Endothelial cell of umbilical vein (primary cell): ENCODE measurements at regions of chr6 and their contacts with region 1.

Region 1: DNA sequence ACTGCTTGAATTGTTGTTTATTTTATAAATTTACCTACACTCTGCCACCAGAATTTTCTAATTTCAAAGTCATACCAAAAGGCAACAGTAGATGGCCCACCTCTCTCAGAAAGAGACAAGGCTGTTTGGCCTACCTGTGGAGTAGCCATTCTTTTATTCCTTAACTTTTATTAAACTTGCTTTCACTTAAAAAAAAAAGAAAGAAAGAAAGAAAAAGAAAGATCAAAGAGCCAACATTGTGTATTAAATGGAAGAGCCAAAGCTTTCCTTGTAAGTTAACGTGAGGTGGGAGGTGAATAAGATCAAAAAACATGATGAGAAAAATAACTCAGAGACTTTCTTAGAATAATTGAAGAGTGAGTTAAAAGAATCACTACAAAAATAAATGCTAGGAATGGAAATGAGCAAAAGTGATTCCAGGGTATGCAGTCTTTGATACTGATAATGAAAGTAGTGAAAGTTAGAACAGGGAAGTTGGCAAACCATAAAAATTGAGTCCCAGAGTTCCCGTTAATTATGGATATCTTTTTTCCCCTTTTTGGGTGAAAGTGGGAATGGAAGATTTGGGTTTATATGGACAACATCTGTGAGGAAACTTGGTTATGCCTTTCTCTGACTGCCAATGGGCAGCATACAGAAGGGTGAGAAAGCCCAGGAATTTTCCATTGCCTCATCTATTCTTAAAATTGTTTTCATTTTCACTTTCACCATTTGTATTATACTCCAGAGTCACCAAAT is 35.9 kb upstream of the MYB start:
- DNase-seq: peak; percentile 34
- H3K4me3 ChIP-seq: no peak overlapping the region
- H3K27ac ChIP-seq: no peak overlapping the region
- H3K4me1 ChIP-seq: no peaks in the 10 kb centered on the region
- H3K27me3 ChIP-seq: peaks cover 6% of the 10 kb centered on the region in 2 experiments
- CTCF ChIP-seq: peak; percentile 30 to 42
- POLR2A ChIP-seq: no peak

Region 2: DNA sequence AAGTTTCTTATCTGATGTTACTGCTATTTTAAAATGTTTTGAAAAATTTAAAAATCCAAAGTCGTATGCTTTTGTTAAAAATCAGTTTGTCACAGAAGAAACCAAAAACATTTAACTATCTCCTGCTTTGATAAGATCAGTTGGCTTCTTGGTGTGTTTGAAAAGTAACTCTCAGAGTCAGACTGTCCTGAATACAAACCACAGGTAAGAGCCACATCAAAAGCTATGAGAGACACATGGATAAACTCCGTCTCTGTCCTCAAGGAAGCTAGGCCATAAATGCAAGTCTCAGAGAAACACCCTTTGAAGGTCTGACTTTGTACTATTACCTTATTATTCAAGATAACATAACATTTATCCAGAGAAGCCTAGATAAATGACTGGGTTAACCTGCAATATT is 98.3 kb before region 1 on chr6:
- CTCF ChIA-PET with region 1: no interaction called
- POLR2A ChIA-PET with region 1: no interaction called
- dilution Hi-C with region 1: no loop called
- intact Hi-C with region 1: no loop called
- DNase-seq: no peak
- H3K4me3 ChIP-seq: no peak overlapping the region
- H3K27ac ChIP-seq: no peak overlapping the region
- H3K4me1 ChIP-seq: peaks cover 11% of the 10 kb centered on the region
- H3K27me3 ChIP-seq: no peaks in the 10 kb centered on the region
- CTCF ChIP-seq: no peak
- POLR2A ChIP-seq: no peak

Region 3: DNA sequence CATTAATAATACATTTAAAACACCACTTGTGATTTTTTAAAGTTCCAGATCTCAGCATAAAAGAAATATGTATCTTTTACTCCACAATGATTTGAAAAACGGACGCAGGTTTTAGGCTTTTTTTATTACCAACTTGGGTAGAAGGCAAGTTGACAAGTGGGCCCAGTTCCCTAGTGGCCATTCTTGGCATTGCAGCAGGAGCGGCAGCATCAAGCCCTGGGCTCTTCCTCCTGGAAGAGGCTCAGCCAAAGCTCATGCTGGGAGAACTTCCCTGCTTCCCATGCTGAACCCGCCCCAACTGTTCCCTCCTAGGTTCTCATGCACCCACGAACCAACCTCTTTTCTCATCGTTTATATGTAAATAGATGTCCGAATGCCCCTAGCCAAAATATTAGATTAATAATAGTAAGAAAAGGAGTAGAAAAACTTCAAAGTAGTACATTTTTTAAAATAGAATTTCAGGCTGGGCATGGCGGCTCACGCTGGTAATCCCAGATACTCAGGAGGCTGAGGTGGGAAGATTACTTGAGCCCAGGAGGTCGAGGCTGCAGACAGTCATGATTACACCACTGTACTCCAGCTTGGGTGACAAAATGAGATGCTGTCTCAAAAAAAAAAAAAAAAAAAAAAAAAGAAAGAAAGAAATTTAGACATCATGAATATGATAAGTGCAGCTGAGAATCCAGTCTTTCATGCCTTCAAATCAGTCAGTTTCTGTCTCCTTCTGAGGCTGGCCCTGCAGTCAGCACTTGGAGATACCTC is 17.6 kb after region 1 on chr6:
- CTCF ChIA-PET with region 1: interaction called, 11 read pairs
- POLR2A ChIA-PET with region 1: no interaction called
- dilution Hi-C with region 1: no loop called
- intact Hi-C with region 1: no loop called
- DNase-seq: peak; percentile 35
- H3K4me3 ChIP-seq: no peak overlapping the region
- H3K27ac ChIP-seq: no peak overlapping the region
- H3K4me1 ChIP-seq: no peaks in the 10 kb centered on the region
- H3K27me3 ChIP-seq: peaks cover 3 to 11% of the 10 kb centered on the region in 2 experiments
- CTCF ChIP-seq: peak; percentile 63 to 78
- POLR2A ChIP-seq: no peak

Region 4: DNA sequence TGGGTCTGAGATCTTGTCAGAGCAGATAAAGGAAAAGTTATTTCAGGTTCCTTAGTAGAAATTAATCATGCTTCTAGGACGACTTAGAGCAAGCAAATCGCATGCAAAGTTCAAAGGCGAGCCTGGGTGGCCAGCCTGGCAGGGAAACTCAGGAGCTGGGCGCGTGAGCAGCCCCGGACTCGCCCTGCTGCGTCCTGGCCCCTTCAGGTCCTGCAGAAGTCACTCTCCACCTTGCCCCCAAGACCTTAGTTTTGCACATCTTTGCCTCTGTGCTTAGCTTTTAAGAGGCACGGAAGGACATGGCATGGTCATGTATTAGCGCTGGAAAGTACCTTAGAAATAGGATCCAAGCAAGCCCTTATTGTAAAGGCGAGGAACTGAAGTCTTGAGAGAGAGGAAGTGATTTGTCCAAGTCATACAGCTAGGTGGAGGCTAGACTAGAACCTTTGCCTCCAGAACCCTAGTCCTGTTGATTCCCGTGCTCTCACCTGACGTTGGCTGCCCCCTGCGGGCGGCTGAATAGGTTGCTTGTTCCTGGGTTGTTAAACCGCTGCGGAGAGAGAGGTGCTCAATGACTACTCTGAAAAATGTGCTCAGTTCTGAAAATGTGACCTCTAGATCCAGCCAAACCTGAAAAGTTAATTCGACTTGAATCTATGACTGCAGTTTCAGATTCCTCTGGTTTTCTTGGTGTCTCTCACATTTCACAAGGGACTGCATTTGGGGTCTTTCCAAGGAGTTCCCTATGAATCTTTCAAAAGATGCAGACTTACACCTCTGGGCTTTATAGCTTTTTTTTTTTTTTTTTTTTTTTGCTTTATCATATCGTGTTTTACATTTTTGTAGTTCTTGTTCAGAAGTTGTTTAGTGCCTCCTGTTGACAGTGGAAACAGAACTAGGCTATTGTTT is 38.6 kb after region 1 on chr6:
- CTCF ChIA-PET with region 1: interaction called, 9 read pairs
- POLR2A ChIA-PET with region 1: no interaction called
- dilution Hi-C with region 1: no loop called
- intact Hi-C with region 1: loop called (anchors 1 kb)
- DNase-seq: peak; percentile 35
- H3K4me3 ChIP-seq: no peak overlapping the region
- H3K27ac ChIP-seq: no peak overlapping the region
- H3K4me1 ChIP-seq: peaks cover 27% of the 10 kb centered on the region
- H3K27me3 ChIP-seq: peaks cover 25 to 32% of the 10 kb centered on the region in 2 experiments
- CTCF ChIP-seq: peak; percentile 53
- POLR2A ChIP-seq: no peak

Region 5: GRCh38 chr6:135411339-135411738 is 266.1 kb after region 1 on chr6:
- CTCF ChIA-PET with region 1: interaction called, 10 read pairs
- POLR2A ChIA-PET with region 1: no interaction called
- dilution Hi-C with region 1: no loop called
- intact Hi-C with region 1: no loop called
- DNase-seq: no peak
- H3K4me3 ChIP-seq: no peak overlapping the region
- H3K27ac ChIP-seq: no peak overlapping the region
- H3K4me1 ChIP-seq: no peaks in the 10 kb centered on the region
- H3K27me3 ChIP-seq: no peaks in the 10 kb centered on the region
- CTCF ChIP-seq: peak in 1 of 2 donors; percentile 5
- POLR2A ChIP-seq: no peak

Region 6: GRCh38 chr6:135423649-135424128 is 278.5 kb after region 1 on chr6:
- CTCF ChIA-PET with region 1: interaction called, 23 read pairs
- POLR2A ChIA-PET with region 1: no interaction called
- dilution Hi-C with region 1: no loop called
- intact Hi-C with region 1: loop called (anchors 1 kb)
- DNase-seq: peak; percentile 62
- H3K4me3 ChIP-seq: no peak overlapping the region
- H3K27ac ChIP-seq: no peak overlapping the region
- H3K4me1 ChIP-seq: peaks cover 11% of the 10 kb centered on the region
- H3K27me3 ChIP-seq: no peaks in the 10 kb centered on the region
- CTCF ChIP-seq: peak; percentile 48 to 51
- POLR2A ChIP-seq: no peak

Region 7: DNA sequence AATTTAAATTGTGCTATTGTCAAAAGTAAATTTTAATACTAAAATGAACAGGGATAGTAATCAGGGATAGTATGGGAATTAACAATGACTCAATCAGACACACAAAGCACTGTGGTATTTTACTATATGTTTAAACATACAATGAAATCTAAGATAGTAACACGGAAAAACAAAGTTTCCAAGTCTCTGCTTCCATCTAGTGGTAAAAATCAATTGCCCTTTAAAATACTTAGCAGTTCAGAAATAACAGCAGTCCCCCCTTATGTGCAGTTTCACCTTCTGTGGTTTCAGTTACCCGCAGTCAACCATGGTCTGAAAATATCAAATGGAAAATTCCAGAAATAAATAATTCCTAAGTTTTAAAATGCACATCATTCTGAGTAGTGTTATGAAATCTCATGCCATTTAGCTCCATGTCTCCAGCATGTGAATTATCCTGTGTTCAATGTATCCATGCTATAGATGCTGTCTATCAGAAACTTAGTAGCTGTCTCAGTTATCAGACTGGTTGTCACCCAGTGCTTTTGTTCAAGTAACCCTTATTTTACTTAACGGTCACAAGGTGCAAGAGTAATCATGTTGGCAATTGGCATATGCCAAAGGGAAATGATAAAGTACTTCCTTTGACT is 293.8 kb after region 1 on chr6:
- CTCF ChIA-PET with region 1: interaction called, 23 read pairs
- POLR2A ChIA-PET with region 1: no interaction called
- dilution Hi-C with region 1: no loop called
- intact Hi-C with region 1: loop called (anchors 1 kb)
- DNase-seq: peak; percentile 55
- H3K4me3 ChIP-seq: no peak overlapping the region
- H3K27ac ChIP-seq: peak overlapping the region; percentile 23
- H3K4me1 ChIP-seq: peaks cover 7% of the 10 kb centered on the region
- H3K27me3 ChIP-seq: no peaks in the 10 kb centered on the region
- CTCF ChIP-seq: peak; percentile 22 to 38
- POLR2A ChIP-seq: no peak